Left cardiac atrium (tissue), 4 donors: ENCODE measurements at regions of chr1 and their contacts with region 1.

Region 1: GRCh38 chr1:28470146-28470545 is 35.7 kb upstream of the RCC1 start:
- DNase-seq: no peak
- ATAC-seq: no peak

Region 2: GRCh38 chr1:27690183-27690582 is 780.0 kb before region 1 on chr1:
- intact Hi-C with region 1: no loop called
- DNase-seq: no peak
- ATAC-seq: no peak

Region 3: DNA sequence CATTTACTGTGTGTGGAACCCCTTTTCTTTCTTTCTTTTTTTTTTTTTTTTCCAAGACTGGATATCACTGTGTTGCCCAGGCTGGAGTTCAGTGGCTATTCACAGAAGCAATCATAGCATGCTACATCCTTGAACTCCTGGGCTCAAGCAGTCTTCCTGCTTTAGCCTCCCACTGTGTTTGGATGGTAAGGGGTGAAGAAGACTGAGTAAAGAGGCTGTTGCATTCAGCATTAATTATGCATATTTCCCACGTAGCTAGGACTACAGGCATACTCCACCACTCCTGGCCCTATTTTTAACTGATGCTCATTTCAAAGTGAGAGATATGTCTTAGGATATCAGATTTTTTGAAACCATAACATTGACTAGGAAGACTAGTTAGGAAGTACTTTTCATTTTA is 61.1 kb before region 1 on chr1:
- intact Hi-C with region 1: loop called (anchors 5 to 10 kb)
- DNase-seq: no peak
- ATAC-seq: no peak

Region 4: GRCh38 chr1:28417429-28417922 is 52.7 kb before region 1 on chr1:
- intact Hi-C with region 1: loop called in 1 of 2 experiments (anchors 10 kb)
- DNase-seq: no peak
- ATAC-seq: peak in 1 of 2 donors; percentile 96

Region 5: DNA sequence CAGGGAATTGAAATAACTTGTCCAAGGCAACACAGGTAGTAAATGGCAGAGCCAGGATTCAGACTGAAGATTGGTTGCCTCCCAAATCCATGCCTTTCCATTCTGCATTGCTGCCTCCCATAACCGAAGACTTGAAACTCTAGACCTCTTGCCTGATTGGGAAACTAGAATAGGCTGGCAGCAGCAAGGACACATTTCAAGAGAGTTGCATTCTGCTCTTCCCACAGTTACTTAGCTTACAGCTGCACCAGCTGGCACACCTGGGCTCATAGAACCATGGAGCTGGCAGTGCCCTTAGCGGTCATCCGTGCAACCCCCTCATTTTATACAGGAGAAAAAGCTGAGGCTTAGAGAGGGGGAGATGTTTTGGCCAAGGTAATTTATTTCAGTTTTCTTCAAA is 90.7 kb after region 1 on chr1:
- intact Hi-C with region 1: no loop called
- DNase-seq: no peak
- ATAC-seq: no peak